ENCODE measurements at regions of chr17 and their contacts with region 1.

Region 1: DNA sequence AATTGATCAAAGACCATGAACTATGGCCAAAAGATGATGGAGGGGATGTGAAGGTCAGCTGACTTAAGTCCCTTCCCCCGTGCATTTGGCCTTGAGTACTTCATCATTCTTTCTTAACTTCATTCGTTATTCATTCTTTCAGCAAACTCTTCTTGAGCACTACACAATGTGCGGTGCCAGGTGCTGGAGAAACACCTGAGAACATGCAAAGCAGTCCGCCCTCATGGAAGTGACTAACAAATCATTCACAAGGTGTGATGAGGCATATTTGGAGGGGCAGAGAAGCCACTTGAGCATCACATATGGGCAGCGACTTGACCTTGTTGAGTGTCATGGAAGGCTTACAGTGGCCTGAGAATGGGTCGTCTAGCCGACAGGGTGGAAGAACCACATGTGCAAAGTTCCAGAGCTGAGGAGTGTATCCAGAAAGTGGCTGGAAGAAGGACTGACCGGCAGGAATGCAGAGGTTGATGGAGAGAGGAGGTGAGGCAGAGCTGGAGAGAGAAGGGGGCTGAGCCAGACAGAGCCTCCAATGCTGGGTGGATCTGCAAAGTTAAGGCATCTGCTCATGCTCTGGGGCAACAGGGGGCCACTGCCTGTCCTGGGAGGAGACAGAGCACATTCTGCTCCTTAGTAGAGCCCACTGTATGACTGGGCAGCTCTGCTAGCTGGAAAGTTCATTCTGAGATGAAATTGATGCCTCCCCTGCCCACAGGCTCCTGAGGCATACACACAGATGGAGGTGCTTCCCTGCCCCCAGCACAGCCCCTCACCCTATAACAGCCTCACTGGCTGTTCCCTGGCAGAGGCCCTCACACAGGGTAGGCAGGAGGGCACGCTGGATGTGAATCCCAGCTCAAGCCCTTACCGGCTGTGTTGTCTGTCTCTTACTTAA is 25.0 kb upstream of the EIF1 start:
- DNase-seq: peak; percentile 39
- ATAC-seq: no peak

Region 2: DNA sequence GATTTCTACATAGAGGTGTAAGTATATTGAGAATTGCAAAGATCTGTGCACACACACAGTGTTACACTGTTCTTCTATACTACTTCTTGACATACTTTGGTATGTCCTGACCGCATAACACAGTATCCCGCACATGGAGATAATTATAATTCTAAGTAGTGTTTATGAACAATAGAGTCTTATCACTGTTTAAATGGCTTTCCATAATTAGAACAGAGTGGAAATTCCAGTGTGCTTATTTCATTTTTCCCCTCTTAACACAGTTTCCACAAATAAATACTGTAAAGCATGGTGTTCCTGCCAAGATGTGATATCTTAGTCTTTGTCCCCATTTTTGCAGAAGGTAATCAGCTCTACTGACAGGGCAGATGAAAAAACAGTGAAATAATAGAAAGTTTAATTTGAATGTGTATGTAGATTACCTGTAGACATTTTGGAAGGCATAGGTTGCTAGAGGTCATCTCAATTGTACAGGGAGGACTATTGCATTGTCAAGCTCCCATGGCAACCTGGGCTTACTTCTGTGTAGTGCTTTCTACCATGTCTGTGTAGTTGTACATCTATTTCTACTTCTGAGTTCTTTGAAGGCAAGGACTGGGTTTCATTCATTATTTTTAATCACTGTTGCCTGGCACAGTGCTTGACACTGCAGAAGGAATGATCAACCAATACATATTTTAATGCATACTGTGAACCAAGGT is 853.8 kb before region 1 on chr17:
- intact Hi-C with region 1: loop called (anchors 5 kb)
- DNase-seq: no peak
- ATAC-seq: peak; percentile 75